ENCODE measurements at regions of chr15 and their contacts with region 1.

Region 1: DNA sequence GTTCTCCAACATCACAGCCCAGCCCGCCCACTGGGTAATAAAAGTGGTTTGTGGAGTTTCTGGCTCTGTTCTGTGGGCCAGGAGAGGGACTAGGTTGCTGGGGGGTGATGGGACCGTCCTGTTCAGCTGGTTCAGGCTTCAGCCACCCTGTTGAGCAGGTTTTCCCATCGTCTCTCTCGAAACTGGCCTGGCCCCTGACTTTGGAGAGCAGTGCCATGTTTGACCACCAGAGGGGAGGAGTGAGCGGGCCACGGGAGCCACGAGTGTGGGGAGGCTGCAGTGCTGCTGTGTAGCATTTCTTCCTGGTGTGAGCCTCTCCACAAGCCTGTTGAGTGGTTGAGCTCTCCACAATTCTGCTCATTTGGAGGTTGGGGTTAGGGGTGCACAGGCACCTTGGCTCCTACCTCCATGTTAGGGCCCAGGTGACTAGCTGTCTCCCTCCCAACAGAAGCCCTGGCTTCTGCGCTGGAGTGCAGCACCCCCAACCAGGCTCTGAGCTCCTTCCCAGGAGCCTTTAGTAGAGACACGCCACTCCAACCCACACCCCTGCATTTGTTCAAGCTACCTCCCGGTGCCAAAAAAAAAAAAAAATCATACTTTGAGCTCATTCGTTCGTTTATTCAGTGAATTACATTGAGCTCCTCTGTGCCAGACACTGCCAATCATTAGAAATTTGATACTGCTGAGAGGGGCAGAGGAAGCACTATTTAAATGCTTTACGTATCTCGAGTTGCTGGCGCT is 13.9 kb downstream of the SPINT1 start:
- DNase-seq: peak; percentile 90
- H3K4me3 ChIP-seq: peak overlapping the region; percentile 25
- H3K27ac ChIP-seq: no peak overlapping the region
- H3K4me1 ChIP-seq: peaks cover 18% of the 10 kb centered on the region
- H3K27me3 ChIP-seq: no peaks in the 10 kb centered on the region
- CTCF ChIP-seq: peak; percentile 99

Region 2: GRCh38 chr15:40664909-40665308 is 192.9 kb before region 1 on chr15:
- CTCF ChIA-PET with region 1: no interaction called
- POLR2A ChIA-PET with region 1: no interaction called
- intact Hi-C with region 1: no loop called
- DNase-seq: no peak
- H3K4me3 ChIP-seq: no peak overlapping the region
- H3K27ac ChIP-seq: no peak overlapping the region
- H3K4me1 ChIP-seq: no peaks in the 10 kb centered on the region
- H3K27me3 ChIP-seq: no peaks in the 10 kb centered on the region
- CTCF ChIP-seq: no peak

Region 3: GRCh38 chr15:40746916-40747514 is 110.8 kb before region 1 on chr15:
- CTCF ChIA-PET with region 1: interaction called, 4 read pairs
- POLR2A ChIA-PET with region 1: no interaction called
- intact Hi-C with region 1: loop called (anchors 2 kb)
- DNase-seq: peak; percentile 87
- H3K4me3 ChIP-seq: no peak overlapping the region
- H3K27ac ChIP-seq: peak overlapping the region; percentile 73
- H3K4me1 ChIP-seq: peaks cover 19% of the 10 kb centered on the region
- H3K27me3 ChIP-seq: no peaks in the 10 kb centered on the region
- CTCF ChIP-seq: no peak

Region 4: DNA sequence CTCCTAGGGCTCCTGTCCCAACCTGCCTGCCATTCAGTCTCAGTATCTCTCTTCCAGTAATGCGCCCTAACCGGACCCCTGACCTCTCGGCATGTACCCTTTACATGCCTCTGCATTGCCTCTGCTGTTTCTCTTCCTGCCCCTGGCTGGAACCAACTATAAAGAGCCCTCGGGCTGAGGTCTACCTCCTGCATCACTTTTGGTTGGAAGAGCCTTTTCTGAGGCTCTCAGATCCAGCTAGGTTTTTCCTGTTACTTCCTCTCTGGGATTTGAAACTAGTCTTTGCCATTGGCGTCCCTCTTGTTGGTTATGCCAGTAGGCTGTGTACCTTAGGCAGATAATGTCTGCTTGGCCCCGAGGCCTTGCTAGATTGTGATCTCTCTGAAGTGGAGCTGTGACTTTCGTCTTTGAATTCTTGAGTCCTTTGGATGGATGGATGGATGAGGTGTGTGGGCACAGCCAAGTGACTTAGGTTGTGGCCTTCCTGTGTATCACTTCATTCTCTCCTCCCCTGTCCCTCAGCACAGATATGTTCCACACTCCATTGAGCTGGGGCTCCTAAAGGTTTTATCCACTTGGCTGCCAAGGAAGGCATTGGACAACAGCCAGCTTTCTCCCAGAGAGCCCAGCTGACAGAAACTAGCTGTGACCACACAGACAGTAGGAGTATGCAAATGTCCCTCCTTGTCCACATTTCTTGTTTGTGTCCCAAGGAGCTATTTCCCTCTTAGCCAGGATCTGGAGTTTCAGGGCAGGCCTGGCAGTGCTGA is 42.7 kb before region 1 on chr15:
- CTCF ChIA-PET with region 1: interaction called, 15 read pairs
- POLR2A ChIA-PET with region 1: no interaction called
- intact Hi-C with region 1: no loop called
- DNase-seq: peak; percentile 36
- H3K4me3 ChIP-seq: no peak overlapping the region
- H3K27ac ChIP-seq: no peak overlapping the region
- H3K4me1 ChIP-seq: no peaks in the 10 kb centered on the region
- H3K27me3 ChIP-seq: no peaks in the 10 kb centered on the region
- CTCF ChIP-seq: no peak

Region 5: DNA sequence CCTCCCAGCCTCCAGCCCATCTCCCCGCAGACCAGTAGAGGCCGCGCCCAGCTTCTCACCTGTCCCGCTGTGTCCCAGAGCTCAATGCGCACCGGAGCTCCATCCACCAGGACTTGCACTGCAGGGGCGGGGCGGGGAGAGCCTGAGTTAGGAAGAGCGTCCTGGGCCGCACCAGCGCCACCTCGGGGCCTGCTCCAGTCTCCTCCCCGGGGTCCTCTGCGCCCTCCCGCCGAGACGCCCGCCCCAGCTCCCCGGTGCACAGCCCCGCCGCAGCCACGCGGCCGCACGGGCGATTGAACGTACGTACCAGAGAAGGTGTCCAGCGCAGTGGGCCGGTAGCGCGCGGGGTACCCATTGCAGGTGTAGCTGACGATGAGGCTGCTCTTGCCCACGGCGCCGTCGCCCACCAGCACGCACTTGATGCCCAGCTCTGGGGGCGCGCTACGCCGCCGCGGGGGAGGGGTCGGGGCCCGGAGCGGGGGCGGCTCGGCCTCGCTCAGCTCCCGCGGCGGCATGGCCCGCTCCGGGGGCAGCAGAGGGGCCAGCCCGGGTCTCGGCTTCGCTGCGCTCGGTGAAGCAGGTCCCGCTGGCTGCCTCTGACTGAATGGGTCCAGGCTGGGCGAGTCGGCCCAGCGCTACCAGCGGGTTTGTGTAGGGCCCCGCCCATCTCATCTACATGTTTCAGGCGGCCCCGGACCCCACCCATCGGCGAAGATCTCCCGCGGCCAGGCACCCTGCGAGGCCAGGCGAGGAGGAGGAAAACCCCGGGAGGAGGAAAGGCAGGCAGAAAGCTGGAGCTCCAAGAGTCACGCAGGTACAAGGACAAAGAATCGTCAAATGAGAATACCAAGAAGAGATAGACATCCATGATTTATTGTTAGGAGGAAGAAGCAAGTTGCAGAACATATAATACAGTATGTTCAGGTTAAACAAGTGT is 16.1 kb after region 1 on chr15 and contains the start of gene RHOV:
- CTCF ChIA-PET with region 1: interaction called, 23 read pairs
- POLR2A ChIA-PET with region 1: interaction called, 4 read pairs
- intact Hi-C with region 1: no loop called
- DNase-seq: peak; percentile 84
- H3K4me3 ChIP-seq: peak within 1 kb of the TSS; percentile 72
- H3K27ac ChIP-seq: peak within 1 kb of the TSS; percentile 48
- H3K4me1 ChIP-seq: peaks cover 4% of the 10 kb centered on the region
- H3K27me3 ChIP-seq: no peaks in the 10 kb centered on the region
- CTCF ChIP-seq: peak; percentile 64
- total RNA-seq, gene RHOV: 1.6 TPM in 2 replicates

Region 6: DNA sequence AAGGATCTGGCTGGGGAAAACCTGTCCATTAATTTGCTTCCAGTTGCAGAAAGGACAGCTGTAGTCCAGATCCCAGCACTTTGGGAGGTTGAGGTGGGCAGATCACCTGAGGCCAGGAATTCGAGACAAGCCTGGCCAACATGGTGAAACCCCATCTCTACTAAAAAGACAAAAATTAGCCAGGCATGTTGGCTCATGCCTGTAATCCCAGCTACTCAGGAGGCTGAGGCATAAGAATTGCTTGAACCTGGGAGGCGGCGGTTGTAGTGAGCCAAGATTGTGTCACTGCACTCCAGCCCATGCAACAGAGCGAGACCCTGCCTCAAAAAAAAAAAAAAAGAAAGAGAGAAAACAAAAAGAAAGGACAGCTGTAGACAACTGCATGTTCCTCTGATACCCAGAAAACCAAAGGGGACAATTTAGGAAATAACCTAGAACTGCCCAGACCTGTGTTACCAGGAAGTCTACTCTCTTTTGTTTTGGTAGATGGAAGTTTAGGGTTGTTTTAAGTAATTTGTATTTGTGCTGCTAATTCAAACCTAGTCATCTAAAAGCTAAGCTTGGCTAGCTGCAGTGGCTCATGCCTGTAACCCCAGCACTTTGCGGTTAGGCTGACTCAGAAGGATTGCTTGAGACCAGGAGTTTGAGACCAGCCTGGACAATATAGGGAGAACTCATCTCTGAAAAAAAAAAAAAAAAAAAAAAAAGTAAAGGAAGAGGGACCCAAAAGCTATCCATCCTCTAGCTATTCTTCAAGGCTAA is 350.1 kb after region 1 on chr15:
- CTCF ChIA-PET with region 1: no interaction called
- POLR2A ChIA-PET with region 1: no interaction called
- intact Hi-C with region 1: no loop called
- DNase-seq: no peak
- H3K4me3 ChIP-seq: no peak overlapping the region
- H3K27ac ChIP-seq: no peak overlapping the region
- H3K4me1 ChIP-seq: no peaks in the 10 kb centered on the region
- H3K27me3 ChIP-seq: no peaks in the 10 kb centered on the region
- CTCF ChIP-seq: no peak

Measured in A673 (cell line).